Naive thymus-derived CD4-positive, alpha-beta T cell (primary cell): ENCODE measurements at regions of chr15 and their contacts with region 1.

Region 1: DNA sequence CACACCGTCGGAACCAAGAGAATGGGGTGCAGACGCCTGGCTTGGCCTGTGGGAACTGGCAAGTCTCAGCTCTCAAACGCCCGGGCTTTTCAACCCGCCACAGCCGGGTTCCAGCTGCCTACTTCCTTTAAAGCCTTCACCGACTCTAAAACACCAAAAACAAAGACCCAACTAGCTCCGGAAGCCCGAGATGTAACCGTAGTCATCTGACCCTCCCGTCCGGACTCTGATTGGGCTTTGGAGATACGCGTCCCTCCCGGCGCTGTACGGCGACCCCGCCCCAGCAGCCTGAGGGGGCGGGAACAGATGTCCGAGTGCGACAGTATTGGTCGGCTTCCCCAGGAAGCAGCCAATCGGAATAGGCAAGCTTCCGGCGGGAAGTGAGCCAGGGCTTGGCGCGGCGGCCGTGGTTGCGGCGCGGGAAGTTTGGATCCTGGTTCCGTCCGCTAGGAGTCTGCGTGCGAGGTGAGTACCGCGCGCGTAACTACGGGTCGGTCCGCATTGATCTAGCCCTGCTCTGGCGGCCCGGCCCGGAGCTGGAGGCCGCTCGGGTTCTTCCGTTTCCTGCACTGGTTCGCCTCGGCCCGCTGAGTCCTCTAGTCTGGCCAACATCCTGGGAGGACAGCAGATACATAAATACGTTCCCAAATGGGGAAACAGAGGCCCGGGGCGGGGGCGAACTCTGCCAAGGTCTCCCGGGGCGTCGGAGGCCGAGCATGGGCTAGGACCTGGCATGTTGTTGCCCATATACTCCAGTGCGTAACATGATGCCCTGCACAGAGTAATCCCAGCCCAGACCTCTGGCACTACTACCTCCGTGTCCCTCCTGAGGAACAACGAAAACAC is at the start of gene BLM:
- DNase-seq: peak; percentile 83 to 98 (median 96)
- ATAC-seq: peak; percentile 100
- H3K4me3 ChIP-seq: peak within 1 kb of the TSS; percentile 75
- H3K4me3 Mint-ChIP-seq: peak within 1 kb of the TSS; percentile 92 to 98 (median 95)
- H3K27ac ChIP-seq: peak within 1 kb of the TSS; percentile 85
- H3K27ac Mint-ChIP-seq: peak within 1 kb of the TSS; percentile 81 to 97 (median 95)
- H3K4me1 ChIP-seq: peaks cover 5 to 9% of the 10 kb centered on the region in 2 donors
- H3K4me1 Mint-ChIP-seq: peaks cover 20 to 35% (median 30%) of the 10 kb centered on the region in 7 donors
- H3K27me3 ChIP-seq: no peaks in the 10 kb centered on the region
- H3K27me3 Mint-ChIP-seq: no peaks in the 10 kb centered on the region
- total RNA-seq, gene BLM: 3.5 to 53.1 (median 6.6) TPM

Region 2: GRCh38 chr15:90376789-90377188 is 340.4 kb before region 1 on chr15:
- CTCF ChIA-PET with region 1: no interaction called
- POLR2A ChIA-PET with region 1: no interaction called
- intact Hi-C with region 1: loop called in 1 of 2 experiments (anchors 5 kb)
- DNase-seq: peak in 8 of 9 donors; percentile 58 to 81 (median 74)
- ATAC-seq: peak; percentile 98
- H3K4me3 ChIP-seq: peak overlapping the region; percentile 11
- H3K4me3 Mint-ChIP-seq: peak overlapping the region; percentile 66 to 87 (median 72)
- H3K27ac ChIP-seq: no peak overlapping the region
- H3K27ac Mint-ChIP-seq: peak overlapping the region; percentile 7 to 92 (median 56)
- H3K4me1 ChIP-seq: peaks cover 32 to 35% of the 10 kb centered on the region in 2 donors
- H3K4me1 Mint-ChIP-seq: peaks cover 24 to 59% (median 48%) of the 10 kb centered on the region in 7 donors
- H3K27me3 ChIP-seq: no peaks in the 10 kb centered on the region
- H3K27me3 Mint-ChIP-seq: no peaks in the 10 kb centered on the region

Region 3: DNA sequence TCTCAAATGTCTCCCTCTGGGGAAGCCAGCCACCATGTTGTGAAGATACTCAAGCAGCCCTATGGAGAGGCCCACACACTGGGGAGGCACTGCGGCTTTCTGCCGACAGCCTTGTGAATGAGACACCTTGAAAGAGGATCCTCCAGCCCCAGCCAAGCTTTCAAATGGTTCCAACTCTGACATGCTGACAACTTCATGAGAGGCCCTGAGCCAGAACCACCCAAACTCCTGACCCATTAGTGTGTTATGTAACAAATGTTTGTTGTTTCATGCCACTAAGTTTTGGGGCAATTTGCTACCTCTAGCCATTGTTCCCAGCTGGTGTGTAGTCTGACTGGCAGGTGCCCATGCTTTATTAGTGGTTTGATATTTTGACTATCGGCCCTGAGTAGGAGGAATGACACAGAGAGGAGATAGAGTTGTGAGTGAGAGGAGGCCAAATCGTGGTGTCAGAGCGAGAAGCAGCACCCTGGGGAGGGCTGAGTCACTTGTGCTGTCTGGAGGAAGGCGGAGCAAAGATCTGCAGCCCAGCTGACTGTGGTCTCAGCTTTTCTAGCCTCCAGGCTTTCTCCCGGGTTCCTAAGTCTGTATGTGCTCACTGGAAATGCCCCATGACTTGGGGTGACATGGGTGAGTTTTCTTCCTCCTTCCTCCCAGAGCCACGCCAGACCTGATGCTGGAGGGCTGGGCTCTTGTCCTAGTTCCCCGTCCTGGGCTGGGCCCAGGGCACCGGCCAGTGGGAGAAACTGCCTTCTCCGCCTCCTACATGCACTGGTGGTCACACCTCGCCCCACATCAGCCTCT is 56.8 kb before region 1 on chr15:
- CTCF ChIA-PET with region 1: no interaction called
- POLR2A ChIA-PET with region 1: interaction called, 8 read pairs
- intact Hi-C with region 1: loop called in 1 of 2 experiments (anchors 2 kb)
- DNase-seq: peak in 6 of 9 donors; percentile 25 to 68 (median 38)
- ATAC-seq: peak; percentile 83
- H3K4me3 ChIP-seq: peak overlapping the region; percentile 45
- H3K4me3 Mint-ChIP-seq: peak overlapping the region; percentile 68 to 93 (median 83)
- H3K27ac ChIP-seq: no peak overlapping the region
- H3K27ac Mint-ChIP-seq: peak overlapping the region in 4 of 9 donors; percentile 32 to 79 (median 74)
- H3K4me1 ChIP-seq: peaks cover 40 to 50% of the 10 kb centered on the region in 2 donors
- H3K4me1 Mint-ChIP-seq: peaks cover 61 to 93% (median 80%) of the 10 kb centered on the region in 7 donors
- H3K27me3 ChIP-seq: no peaks in the 10 kb centered on the region
- H3K27me3 Mint-ChIP-seq: peaks cover 0 to 32% (median 14%) of the 10 kb centered on the region in 5 donors

Region 4: GRCh38 chr15:90757461-90757860 is 40.3 kb after region 1 on chr15:
- CTCF ChIA-PET with region 1: no interaction called
- POLR2A ChIA-PET with region 1: interaction called, 4 read pairs
- intact Hi-C with region 1: loop called in 1 of 2 experiments (anchors 5 kb)
- DNase-seq: no peak
- ATAC-seq: no peak
- H3K4me3 ChIP-seq: no peak overlapping the region
- H3K4me3 Mint-ChIP-seq: no peak overlapping the region
- H3K27ac ChIP-seq: no peak overlapping the region
- H3K27ac Mint-ChIP-seq: peak overlapping the region in 3 of 9 donors; percentile 14 to 62 (median 27)
- H3K4me1 ChIP-seq: no peaks in the 10 kb centered on the region
- H3K4me1 Mint-ChIP-seq: peaks cover 0 to 48% (median 0%) of the 10 kb centered on the region in 7 donors
- H3K27me3 ChIP-seq: no peaks in the 10 kb centered on the region
- H3K27me3 Mint-ChIP-seq: no peaks in the 10 kb centered on the region

Region 5: DNA sequence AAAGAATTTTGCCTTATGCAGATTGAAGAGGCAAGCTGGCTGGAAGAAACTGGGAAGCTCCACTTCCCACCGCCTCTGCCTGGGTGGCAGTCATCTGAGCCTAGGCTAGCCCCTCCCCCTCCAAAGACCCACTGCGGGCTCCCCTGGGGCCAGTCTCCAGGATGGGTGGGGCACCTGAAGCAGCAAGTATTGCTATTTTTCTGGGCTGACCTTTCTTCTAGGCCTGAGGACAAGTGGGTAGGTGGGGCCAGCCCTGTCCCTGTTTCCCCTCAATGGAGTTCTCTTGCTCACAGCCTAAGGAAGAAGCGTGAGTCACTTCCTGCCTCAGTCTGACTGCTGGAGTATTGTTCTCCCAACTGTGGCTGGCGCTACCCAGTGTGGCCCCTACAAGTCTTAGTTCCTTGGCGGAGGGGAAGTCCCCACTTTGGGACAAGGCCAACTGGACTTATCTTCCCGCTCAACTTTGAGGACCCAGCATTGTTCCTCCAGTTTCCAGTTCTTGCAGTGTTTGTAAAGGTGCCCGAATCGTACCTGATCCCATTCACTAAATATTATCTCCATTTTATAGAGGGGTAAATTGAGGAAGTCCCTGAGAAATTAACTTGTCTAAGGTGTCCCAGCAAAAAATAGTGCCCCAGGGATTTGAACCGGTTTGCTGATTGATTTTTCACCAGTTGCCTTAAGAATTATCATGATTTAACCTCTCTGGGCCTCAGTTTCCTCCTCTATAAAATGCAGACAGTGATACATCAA is 152.6 kb after region 1 on chr15:
- CTCF ChIA-PET with region 1: no interaction called
- POLR2A ChIA-PET with region 1: interaction called, 10 read pairs
- intact Hi-C with region 1: loop called (anchors 1 to 5 kb)
- DNase-seq: peak in 1 of 9 donors; percentile 67
- ATAC-seq: peak; percentile 73
- H3K4me3 ChIP-seq: peak overlapping the region; percentile 53
- H3K4me3 Mint-ChIP-seq: peak overlapping the region; percentile 82 to 93 (median 90)
- H3K27ac ChIP-seq: peak overlapping the region; percentile 73
- H3K27ac Mint-ChIP-seq: peak overlapping the region; percentile 82 to 97 (median 92)
- H3K4me1 ChIP-seq: peaks cover 27% of the 10 kb centered on the region in 2 donors
- H3K4me1 Mint-ChIP-seq: peaks cover 22 to 66% (median 45%) of the 10 kb centered on the region in 7 donors
- H3K27me3 ChIP-seq: no peaks in the 10 kb centered on the region
- H3K27me3 Mint-ChIP-seq: no peaks in the 10 kb centered on the region

Region 6: DNA sequence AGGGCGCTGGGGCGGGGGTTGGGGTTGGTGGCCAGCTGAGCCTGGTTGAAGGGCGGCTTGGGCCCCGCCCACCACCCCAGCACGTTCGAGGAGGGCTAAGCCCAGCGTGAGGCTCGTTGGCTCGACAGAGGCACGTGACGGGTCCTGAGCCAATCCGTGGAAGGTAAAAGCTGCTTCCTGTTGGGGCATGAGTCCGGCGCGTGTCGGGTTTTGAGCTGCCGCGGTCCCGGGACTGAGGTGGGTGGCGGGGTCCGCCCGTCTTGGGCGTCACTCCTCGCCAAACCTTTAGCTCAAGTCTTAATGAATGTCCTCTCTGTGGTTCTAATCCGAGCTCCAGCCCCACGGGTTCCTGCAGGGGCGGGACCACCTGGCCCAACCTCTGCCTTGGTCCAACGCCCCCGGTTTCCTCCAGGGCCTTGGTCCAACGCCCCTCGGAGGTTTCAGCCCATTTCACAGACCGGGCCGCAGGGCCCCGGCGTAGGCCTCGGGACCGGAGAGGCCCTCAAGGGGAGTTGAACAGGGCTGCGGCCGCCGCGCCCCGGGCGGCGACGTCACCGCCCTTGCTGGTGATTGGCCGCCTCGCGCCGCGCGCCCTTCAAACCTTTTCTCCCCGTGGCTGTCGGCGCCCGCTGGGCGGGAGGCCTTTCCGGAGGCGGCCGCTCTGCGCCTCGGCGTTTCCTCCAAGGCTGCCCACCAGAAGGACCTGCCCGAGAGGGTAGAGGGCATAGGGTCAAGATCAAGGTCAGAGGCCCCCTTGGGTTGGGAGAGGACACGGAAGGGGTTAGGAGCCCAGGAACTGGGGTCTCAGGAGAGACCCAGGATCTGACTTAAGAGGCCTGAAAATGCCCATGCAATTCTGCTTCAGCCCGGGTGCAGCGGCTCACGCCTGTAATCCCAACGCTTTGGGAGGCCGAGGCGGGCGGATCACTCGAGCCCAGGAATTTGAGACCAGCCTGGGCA is 237.8 kb after region 1 on chr15 and contains the start of gene RCCD1:
- CTCF ChIA-PET with region 1: no interaction called
- POLR2A ChIA-PET with region 1: interaction called, 3 read pairs
- intact Hi-C with region 1: loop called in 1 of 2 experiments (anchors 1 kb)
- DNase-seq: peak; percentile 67 to 90 (median 85)
- ATAC-seq: peak; percentile 98
- H3K4me3 ChIP-seq: peak within 1 kb of the TSS; percentile 100
- H3K4me3 Mint-ChIP-seq: peak within 1 kb of the TSS; percentile 81 to 90 (median 87)
- H3K27ac ChIP-seq: peak within 1 kb of the TSS; percentile 98
- H3K27ac Mint-ChIP-seq: peak within 1 kb of the TSS; percentile 76 to 96 (median 94)
- H3K4me1 ChIP-seq: peaks cover 10 to 15% of the 10 kb centered on the region in 2 donors
- H3K4me1 Mint-ChIP-seq: peaks cover 6 to 24% (median 12%) of the 10 kb centered on the region in 7 donors
- H3K27me3 ChIP-seq: no peaks in the 10 kb centered on the region
- H3K27me3 Mint-ChIP-seq: no peaks in the 10 kb centered on the region
- total RNA-seq, gene RCCD1: 5.8 to 24.6 (median 16.3) TPM